Activated T-helper 1 cell treated with anti-CD3 and anti-CD28 coated beads, Interleukin-12 subunit alpha, Interleukin-12 subunit beta, Interleukin-2, Interleukin-4 antibody, amounts not matched to agents 30 ng/mL and 10 ng/mL and 1 ng/mL, durations not matched to agents 14 hours and 24 hours and 36 hours (primary cell): ENCODE measurements at regions of chr1 and their contacts with region 1.

Region 1: GRCh38 chr1:181142096-181142958 is 53.8 kb downstream of the IER5 start:
- DNase-seq: peak; percentile 81
- H3K4me3 Mint-ChIP-seq: peak overlapping the region; percentile 58
- H3K27ac Mint-ChIP-seq: peak overlapping the region; percentile 84
- H3K4me1 Mint-ChIP-seq: peaks cover 64% of the 10 kb centered on the region
- H3K27me3 Mint-ChIP-seq: peaks cover 18% of the 10 kb centered on the region

Region 2: DNA sequence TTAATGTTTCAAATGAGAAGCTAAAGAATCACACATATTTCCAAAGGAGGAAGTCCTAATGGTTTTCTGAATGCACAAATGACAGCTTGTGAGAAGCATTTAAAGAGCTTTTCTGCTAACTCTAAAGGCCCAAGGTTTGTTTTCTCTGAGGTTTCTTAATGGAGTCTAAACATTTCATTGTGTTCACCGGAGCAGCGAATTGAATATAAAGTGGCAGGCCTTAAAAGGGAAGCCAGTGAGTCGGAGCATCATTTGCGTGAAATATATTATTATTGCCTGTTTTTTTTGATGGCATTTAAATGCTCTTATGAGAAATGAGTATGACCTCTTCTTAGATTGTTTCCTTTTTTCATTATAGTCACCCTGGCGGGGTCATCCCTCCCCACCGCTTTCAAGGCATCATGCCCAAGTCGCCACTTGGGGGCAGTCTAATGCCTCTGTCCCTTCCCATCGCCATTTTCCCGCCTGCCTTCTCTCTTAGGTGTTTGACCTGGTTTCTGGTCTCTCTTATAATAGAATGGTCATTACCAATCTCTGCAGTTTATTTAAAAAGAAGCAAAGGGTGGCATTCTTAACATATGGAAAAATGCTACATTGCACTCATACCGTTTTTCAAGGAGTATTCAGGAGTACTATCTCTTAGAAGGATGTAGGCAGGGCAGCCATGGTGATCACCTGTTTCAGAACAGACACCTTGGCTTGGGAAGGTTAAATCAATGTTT is 608.9 kb before region 1 on chr1:
- intact Hi-C with region 1: loop called (anchors 5 kb)
- DNase-seq: peak; percentile 42
- H3K4me3 Mint-ChIP-seq: no peak overlapping the region
- H3K27ac Mint-ChIP-seq: no peak overlapping the region
- H3K4me1 Mint-ChIP-seq: no peaks in the 10 kb centered on the region
- H3K27me3 Mint-ChIP-seq: peaks cover 6% of the 10 kb centered on the region

Region 3: DNA sequence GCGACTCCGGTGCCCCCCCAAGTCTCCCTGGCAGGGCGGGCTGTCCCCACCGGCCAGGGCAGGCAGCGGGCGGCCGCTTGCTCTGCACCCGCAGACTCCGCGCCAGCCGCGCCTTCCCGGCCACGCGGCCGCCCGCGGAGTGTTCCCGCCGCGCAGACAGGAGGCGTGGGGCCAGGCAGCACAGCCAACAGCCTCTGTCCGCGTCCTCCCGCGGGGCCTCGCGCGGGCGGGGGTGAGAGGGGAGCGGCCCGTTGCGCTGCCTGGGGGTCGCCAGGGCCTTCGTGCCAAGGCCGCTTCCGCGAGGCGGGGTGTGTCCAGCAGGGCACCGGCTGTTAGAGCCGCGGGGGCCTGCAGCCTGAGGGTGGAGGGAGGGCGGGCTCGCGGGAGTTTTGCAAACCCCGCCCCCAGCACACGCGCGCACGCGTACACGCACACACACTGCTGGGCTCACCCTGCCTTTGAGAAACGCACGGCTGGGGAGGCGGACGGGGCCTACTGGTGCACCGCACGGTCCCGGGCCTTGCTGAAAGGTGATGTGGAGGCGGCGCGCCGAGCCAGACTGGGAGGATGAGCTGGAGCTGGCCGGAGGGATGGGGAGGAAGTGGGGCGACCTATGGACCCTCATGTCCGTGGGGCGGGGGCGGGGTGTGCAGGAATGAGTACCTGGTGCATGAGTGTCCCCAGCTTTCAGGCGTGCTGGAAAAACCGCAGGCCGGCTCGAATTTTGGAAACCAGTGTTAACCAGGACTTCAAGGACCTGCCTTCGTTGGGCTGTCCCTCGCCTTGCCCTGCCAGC is 188.1 kb before region 1 on chr1:
- intact Hi-C with region 1: loop called (anchors 5 kb)
- DNase-seq: peak; percentile 49
- H3K4me3 Mint-ChIP-seq: peak overlapping the region; percentile 33
- H3K27ac Mint-ChIP-seq: no peak overlapping the region
- H3K4me1 Mint-ChIP-seq: no peaks in the 10 kb centered on the region
- H3K27me3 Mint-ChIP-seq: peaks cover 2% of the 10 kb centered on the region

Region 4: DNA sequence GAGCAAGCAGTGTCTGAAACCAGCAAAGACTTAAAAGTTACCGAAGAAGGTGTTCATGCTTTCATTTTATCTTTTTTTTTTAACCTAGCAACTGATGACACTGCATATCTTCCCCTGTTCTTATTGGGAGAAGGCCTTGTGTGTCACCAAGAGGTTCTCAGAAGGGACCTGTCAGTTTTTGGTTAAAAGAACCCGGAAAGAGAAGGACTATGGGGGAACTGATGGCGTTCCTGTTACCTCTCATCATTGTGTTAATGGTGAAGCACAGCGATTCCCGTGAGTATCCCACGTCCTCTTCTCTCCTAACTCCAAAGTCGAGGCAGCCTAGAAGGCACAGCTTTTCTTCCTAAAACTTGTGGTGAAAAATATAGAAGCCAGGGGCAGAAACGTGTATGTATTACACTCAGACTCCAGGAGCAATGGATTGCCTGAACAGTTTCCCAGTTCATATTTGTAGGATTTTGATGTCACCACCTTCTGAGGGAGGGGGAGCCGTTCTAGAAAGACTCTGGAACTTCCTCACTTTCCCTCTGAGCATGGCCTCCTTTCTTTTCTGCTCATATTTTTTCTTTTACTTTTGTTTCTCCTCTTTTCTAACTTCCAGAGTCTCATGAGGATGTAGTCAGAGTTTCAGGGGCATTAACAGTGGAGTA is 108.4 kb before region 1 on chr1 and contains the start of gene MR1:
- intact Hi-C with region 1: loop called (anchors 1 kb)
- DNase-seq: peak; percentile 51
- H3K4me3 Mint-ChIP-seq: peak within 1 kb of the TSS; percentile 95
- H3K27ac Mint-ChIP-seq: peak within 1 kb of the TSS; percentile 96
- H3K4me1 Mint-ChIP-seq: peaks cover 63% of the 10 kb centered on the region
- H3K27me3 Mint-ChIP-seq: no peaks in the 10 kb centered on the region
- total RNA-seq, gene MR1: 16.6 and 17.6 TPM in 2 replicates

Region 5: DNA sequence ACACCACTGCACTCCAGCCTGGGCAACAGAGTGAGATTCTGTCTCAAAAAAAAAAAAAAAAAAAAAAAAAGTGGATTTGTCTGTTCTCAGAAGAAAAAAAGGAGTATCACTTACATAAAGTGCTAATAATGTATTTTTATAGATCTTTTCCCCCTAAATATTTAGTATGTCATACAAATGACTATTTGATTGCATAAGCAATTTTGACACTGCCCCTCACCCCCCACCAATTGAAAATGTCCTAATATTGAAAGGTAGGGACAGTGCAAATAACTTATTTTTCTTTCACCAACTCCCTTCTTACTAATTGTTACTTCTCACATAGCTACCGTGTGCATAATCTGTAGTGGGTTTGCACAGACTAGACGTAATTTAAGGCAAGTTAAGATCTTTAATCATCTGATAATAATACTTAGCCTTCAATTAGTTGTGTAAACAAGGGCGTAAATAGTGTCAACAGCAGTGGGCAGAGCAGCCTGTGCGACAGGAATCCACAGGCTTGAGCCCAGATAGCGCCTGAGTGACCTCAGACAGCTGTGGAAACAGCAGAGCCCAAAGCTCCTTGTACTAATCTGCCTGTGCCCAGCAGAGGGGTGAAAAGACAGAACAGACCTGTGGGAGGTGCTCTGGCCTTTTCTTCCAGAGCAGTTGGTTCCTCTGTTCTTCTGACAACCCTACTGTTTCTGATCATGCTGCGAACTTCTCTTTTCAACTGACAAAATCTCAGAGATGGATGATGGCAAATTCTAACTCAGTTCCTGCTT is 58.3 kb before region 1 on chr1:
- intact Hi-C with region 1: loop called (anchors 1 kb)
- DNase-seq: peak; percentile 54
- H3K4me3 Mint-ChIP-seq: no peak overlapping the region
- H3K27ac Mint-ChIP-seq: peak overlapping the region; percentile 13
- H3K4me1 Mint-ChIP-seq: peaks cover 47% of the 10 kb centered on the region
- H3K27me3 Mint-ChIP-seq: peaks cover 21% of the 10 kb centered on the region

Region 6: DNA sequence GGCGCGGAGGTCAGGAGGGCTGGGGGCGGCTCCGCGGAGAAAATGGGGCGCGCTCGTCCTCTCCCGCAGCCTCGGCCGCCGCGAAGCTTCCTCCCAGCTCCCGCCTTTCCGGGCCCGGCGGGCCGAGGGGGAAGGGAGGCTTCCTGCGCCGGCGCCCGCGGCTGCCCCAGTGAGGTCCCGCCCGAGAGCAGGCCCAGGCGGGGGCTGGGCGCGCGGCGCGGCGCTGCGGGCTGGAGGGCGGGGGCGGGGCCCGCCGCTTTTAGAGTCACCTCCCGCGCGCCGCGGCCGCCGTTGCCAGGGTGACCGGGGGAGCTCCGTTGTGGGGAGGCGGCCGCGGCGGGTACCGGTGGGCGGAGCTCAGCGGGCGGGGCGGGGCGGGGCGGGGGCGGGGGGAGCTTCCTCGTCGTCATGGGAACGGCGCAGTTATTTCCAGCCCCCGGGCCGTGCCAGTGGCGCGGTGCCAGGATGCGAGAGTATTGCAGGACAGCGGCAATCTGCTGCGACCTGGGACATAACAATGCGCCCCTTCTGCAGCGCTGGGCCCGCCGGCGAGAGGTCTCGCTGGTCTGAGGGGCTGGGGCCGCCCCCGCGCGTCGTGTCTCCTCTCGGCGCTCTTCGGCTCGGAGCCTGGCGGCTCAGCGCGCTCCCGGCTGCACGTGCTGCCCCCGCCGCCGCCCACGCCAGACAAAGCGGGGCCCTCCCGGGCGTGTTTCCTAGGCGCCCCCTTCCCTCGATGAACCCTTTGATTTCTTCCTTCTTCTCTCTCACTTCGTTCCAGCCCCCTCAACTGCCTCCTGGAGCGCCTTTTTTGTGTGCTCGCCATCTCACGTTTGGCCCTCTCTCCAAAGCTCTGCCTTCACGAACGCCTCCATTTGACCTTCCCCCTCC is 36.9 kb before region 1 on chr1:
- intact Hi-C with region 1: loop called (anchors 1 kb)
- DNase-seq: peak; percentile 87
- H3K4me3 Mint-ChIP-seq: peak overlapping the region; percentile 82
- H3K27ac Mint-ChIP-seq: peak overlapping the region; percentile 88
- H3K4me1 Mint-ChIP-seq: peaks cover 72% of the 10 kb centered on the region
- H3K27me3 Mint-ChIP-seq: peaks cover 34% of the 10 kb centered on the region

Region 7: GRCh38 chr1:181202986-181203555 is 60.7 kb after region 1 on chr1:
- intact Hi-C with region 1: no loop called
- DNase-seq: no peak
- H3K4me3 Mint-ChIP-seq: no peak overlapping the region
- H3K27ac Mint-ChIP-seq: no peak overlapping the region
- H3K4me1 Mint-ChIP-seq: no peaks in the 10 kb centered on the region
- H3K27me3 Mint-ChIP-seq: peaks cover 12% of the 10 kb centered on the region